Keratinocyte (primary cell): ENCODE measurements at regions of chr18 and their contacts with region 1.

Region 1: GRCh38 chr18:12911025-12911928 is 27.2 kb upstream of the PTPN2 start:
- DNase-seq: no peak
- H3K4me3 ChIP-seq: no peak overlapping the region
- H3K27ac ChIP-seq: no peak overlapping the region
- H3K4me1 ChIP-seq: peaks cover 2% of the 10 kb centered on the region
- H3K27me3 ChIP-seq: peaks cover 7% of the 10 kb centered on the region
- CTCF ChIP-seq: no peak

Region 2: GRCh38 chr18:12726774-12727550 is 184.3 kb before region 1 on chr18:
- dilution Hi-C with region 1: loop called (anchors 25 kb)
- DNase-seq: no peak
- H3K4me3 ChIP-seq: no peak overlapping the region
- H3K27ac ChIP-seq: no peak overlapping the region
- H3K4me1 ChIP-seq: no peaks in the 10 kb centered on the region
- H3K27me3 ChIP-seq: no peaks in the 10 kb centered on the region
- CTCF ChIP-seq: peak; percentile 76 to 93 (median 79)

Region 3: GRCh38 chr18:12973562-12974213 is 62.4 kb after region 1 on chr18:
- dilution Hi-C with region 1: no loop called
- DNase-seq: no peak
- H3K4me3 ChIP-seq: no peak overlapping the region
- H3K27ac ChIP-seq: no peak overlapping the region
- H3K4me1 ChIP-seq: peaks cover 4% of the 10 kb centered on the region
- H3K27me3 ChIP-seq: no peaks in the 10 kb centered on the region
- CTCF ChIP-seq: no peak

Region 4: GRCh38 chr18:13051950-13052349 is 140.7 kb after region 1 on chr18:
- dilution Hi-C with region 1: no loop called
- DNase-seq: no peak
- H3K4me3 ChIP-seq: no peak overlapping the region
- H3K27ac ChIP-seq: no peak overlapping the region
- H3K4me1 ChIP-seq: no peaks in the 10 kb centered on the region
- H3K27me3 ChIP-seq: no peaks in the 10 kb centered on the region
- CTCF ChIP-seq: no peak

Region 5: GRCh38 chr18:13124411-13124810 is 213.1 kb after region 1 on chr18:
- dilution Hi-C with region 1: no loop called
- DNase-seq: no peak
- H3K4me3 ChIP-seq: no peak overlapping the region
- H3K27ac ChIP-seq: no peak overlapping the region
- H3K4me1 ChIP-seq: peaks cover 9% of the 10 kb centered on the region
- H3K27me3 ChIP-seq: no peaks in the 10 kb centered on the region
- CTCF ChIP-seq: no peak